H1 (cell line): ENCODE measurements at regions of chr17 and their contacts with region 1.

Region 1: GRCh38 chr17:18183334-18184142 is at the start of gene ALKBH5:
- DNase-seq: peak; percentile 94 to 95
- H3K4me3 ChIP-seq: peak within 1 kb of the TSS; percentile 52 to 87 (median 80)
- H3K27ac ChIP-seq: peak within 1 kb of the TSS; percentile 90
- H3K4me1 ChIP-seq: peaks cover 5 to 25% (median 8%) of the 10 kb centered on the region in 4 experiments; a peak in 6 of 7 replicates
- H3K27me3 ChIP-seq: no peaks in the 10 kb centered on the region
- CTCF ChIP-seq: peak; percentile 33 to 62 (median 49); a peak in 3 of 4 replicates
- EP300 ChIP-seq: peak in 1 of 2 experiments; percentile 32; a peak in 1 of 3 replicates
- POLR2A ChIP-seq: no peak; a peak in 1 of 3 replicates
- RAD21 ChIP-seq: no peak
- total RNA-seq, gene ALKBH5: 86.4 and 86.6 TPM in 2 replicates

Region 2: GRCh38 chr17:18153749-18154161 is 29.8 kb before region 1 on chr17:
- CTCF ChIA-PET with region 1: interaction called, 9 read pairs
- POLR2A ChIA-PET with region 1: interaction called, 17 read pairs
- DNase-seq: peak; percentile 91 to 96
- H3K4me3 ChIP-seq: peak overlapping the region; percentile 32 to 63 (median 44)
- H3K27ac ChIP-seq: no peak overlapping the region; the same call in 1 of the 2 replicates
- H3K4me1 ChIP-seq: peaks cover 2 to 19% (median 10%) of the 10 kb centered on the region in 4 experiments
- H3K27me3 ChIP-seq: no peaks in the 10 kb centered on the region; a peak in 1 of 7 replicates
- CTCF ChIP-seq: no peak
- EP300 ChIP-seq: no peak
- POLR2A ChIP-seq: peak in 1 of 2 experiments; percentile 79; a peak in 2 of 3 replicates
- RAD21 ChIP-seq: no peak

Region 3: GRCh38 chr17:18166894-18167293 is 16.6 kb before region 1 on chr17:
- CTCF ChIA-PET with region 1: interaction called, 12 read pairs
- POLR2A ChIA-PET with region 1: interaction called, 43 read pairs
- DNase-seq: no peak
- H3K4me3 ChIP-seq: no peak overlapping the region
- H3K27ac ChIP-seq: no peak overlapping the region
- H3K4me1 ChIP-seq: no peaks in the 10 kb centered on the region; a peak in 1 of 7 replicates
- H3K27me3 ChIP-seq: no peaks in the 10 kb centered on the region
- CTCF ChIP-seq: peak in 2 of 3 experiments; percentile 4 to 14; a peak in 2 of 4 replicates
- EP300 ChIP-seq: no peak
- POLR2A ChIP-seq: no peak
- RAD21 ChIP-seq: peak; percentile 34 to 54; a peak in 3 of 4 replicates

Region 4: DNA sequence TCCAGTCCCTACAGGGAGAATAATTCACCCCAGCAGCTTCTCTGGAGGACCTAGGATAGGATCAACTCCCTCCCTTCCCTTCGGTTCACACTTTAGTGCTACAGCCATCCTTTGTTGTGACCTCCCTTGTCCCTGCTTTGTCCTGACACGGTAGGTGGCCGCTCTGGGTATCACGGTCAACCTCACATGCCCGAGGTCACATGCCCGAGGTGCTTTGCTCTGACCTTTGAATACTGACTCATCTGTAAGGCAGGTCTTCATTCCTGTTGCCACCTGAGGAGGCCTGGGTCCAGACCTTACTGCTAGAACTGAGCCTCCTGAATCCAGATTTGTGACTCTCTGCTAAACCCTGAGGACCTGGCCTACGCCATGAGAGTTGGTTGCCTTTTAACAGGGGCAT is 19.8 kb after region 1 on chr17:
- CTCF ChIA-PET with region 1: interaction called, 78 read pairs
- POLR2A ChIA-PET with region 1: interaction called, 34 read pairs
- DNase-seq: no peak
- H3K4me3 ChIP-seq: no peak overlapping the region
- H3K27ac ChIP-seq: 0 out of 2 replicates have a peak overlapping the region, but pooled peaks have one; percentile 32
- H3K4me1 ChIP-seq: peaks cover 0 to 8% (median 5%) of the 10 kb centered on the region in 4 experiments; a peak in 5 of 7 replicates
- H3K27me3 ChIP-seq: no peaks in the 10 kb centered on the region
- CTCF ChIP-seq: no peak
- EP300 ChIP-seq: no peak
- POLR2A ChIP-seq: no peak
- RAD21 ChIP-seq: no peak

Region 5: DNA sequence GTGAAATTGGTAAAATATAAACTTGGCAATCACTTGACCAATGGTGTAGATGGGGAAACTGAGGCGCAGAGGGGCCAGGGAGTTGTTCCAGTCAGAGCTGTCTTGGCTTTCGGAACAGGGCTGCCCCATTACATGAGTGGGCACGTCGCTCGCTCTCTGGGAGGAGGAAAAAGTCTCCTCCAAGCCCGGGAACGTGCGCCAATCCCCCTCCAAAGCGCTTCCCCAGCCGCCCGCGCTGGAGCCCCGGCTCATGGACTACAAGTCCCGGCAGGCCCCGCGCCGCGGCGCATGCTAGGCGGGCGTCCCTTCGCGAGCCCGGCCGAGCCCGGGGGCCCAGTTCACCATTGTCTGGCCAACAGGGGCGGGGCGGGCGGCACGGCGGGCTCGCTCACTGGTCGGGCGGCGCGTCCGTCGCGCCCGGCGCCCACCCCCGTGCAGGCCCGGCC is 41.6 kb after region 1 on chr17:
- CTCF ChIA-PET with region 1: no interaction called
- POLR2A ChIA-PET with region 1: interaction called, 22 read pairs
- DNase-seq: peak; percentile 85 to 96
- H3K4me3 ChIP-seq: peak overlapping the region; percentile 70 to 98 (median 79)
- H3K27ac ChIP-seq: peak overlapping the region; percentile 97
- H3K4me1 ChIP-seq: peaks cover 0 to 18% (median 10%) of the 10 kb centered on the region in 4 experiments; a peak in 6 of 7 replicates
- H3K27me3 ChIP-seq: no peaks in the 10 kb centered on the region
- CTCF ChIP-seq: no peak
- EP300 ChIP-seq: no peak
- POLR2A ChIP-seq: no peak
- RAD21 ChIP-seq: no peak